ENCODE measurements at regions of chr3 and their contacts with region 1.

Region 1: DNA sequence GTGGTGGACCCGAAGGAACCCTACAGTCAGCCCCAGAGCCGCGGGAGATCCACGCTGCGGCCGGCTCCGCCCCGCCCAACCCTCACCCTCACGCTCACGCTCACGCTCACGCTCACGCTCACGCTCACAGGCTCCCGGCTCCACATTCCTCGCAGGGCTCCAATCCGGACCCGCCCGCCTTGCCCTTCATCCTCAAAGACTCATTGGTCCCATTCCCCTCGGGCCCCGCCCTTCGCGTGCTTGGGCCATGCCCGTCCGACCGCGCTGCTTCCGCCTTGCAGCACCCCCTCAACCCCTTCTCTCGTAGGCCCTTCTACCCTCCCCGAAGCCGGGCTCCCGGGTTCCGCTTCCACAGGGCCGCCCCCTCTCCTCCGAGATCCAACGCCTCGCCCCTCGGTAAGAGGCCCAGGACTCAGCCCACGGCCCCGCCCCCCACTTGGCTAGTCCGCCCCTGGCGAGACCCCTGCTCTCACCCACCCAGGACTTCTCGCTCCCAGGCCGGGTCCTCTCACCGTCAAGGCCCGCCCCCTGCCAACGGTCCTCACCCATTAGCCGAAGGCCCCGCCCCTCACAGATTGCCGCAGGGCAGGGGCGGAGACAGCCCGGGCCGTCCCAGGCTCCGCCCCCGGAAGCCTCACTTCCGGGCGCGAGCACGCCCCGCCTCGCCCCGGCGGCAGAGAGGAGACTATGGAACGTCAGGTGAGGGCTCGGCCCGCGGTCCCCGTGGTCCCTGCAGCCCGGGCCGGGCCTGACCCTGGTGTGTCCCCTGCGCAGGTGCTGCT is at the start of gene APEH:
- DNase-seq: peak; percentile 98
- H3K4me3 Mint-ChIP-seq: peak within 1 kb of the TSS; percentile 84
- H3K27ac Mint-ChIP-seq: peak within 1 kb of the TSS; percentile 99
- H3K4me1 Mint-ChIP-seq: peaks cover 37% of the 10 kb centered on the region
- H3K27me3 Mint-ChIP-seq: no peaks in the 10 kb centered on the region
- total RNA-seq, gene APEH: 137 TPM

Region 2: GRCh38 chr3:49638445-49638844 is 35.5 kb before region 1 on chr3:
- CTCF ChIA-PET with region 1: interaction called, 12 read pairs
- POLR2A ChIA-PET with region 1: no interaction called
- DNase-seq: no peak
- H3K4me3 Mint-ChIP-seq: no peak overlapping the region
- H3K27ac Mint-ChIP-seq: no peak overlapping the region
- H3K4me1 Mint-ChIP-seq: no peaks in the 10 kb centered on the region
- H3K27me3 Mint-ChIP-seq: peaks cover 2% of the 10 kb centered on the region

Region 3: GRCh38 chr3:49648354-49649019 is 25.4 kb before region 1 on chr3:
- CTCF ChIA-PET with region 1: no interaction called
- POLR2A ChIA-PET with region 1: no interaction called
- DNase-seq: no peak
- H3K4me3 Mint-ChIP-seq: no peak overlapping the region
- H3K27ac Mint-ChIP-seq: peak overlapping the region; percentile 44
- H3K4me1 Mint-ChIP-seq: no peaks in the 10 kb centered on the region
- H3K27me3 Mint-ChIP-seq: no peaks in the 10 kb centered on the region

Region 4: GRCh38 chr3:49659756-49660155 is 14.2 kb before region 1 on chr3:
- CTCF ChIA-PET with region 1: interaction called, 10 read pairs
- POLR2A ChIA-PET with region 1: no interaction called
- DNase-seq: no peak
- H3K4me3 Mint-ChIP-seq: no peak overlapping the region
- H3K27ac Mint-ChIP-seq: no peak overlapping the region
- H3K4me1 Mint-ChIP-seq: no peaks in the 10 kb centered on the region
- H3K27me3 Mint-ChIP-seq: no peaks in the 10 kb centered on the region